GM12878 (cell line): ENCODE measurements at regions of chr20 and their contacts with region 1.

Region 1: GRCh38 chr20:6863798-6864201 is 96.3 kb downstream of the BMP2 start:
- DNase-seq: no peak
- ATAC-seq: peak; percentile 60
- H3K4me3 ChIP-seq: no peak overlapping the region
- H3K27ac ChIP-seq: no peak overlapping the region
- H3K4me1 ChIP-seq: no peaks in the 10 kb centered on the region
- H3K27me3 ChIP-seq: no peaks in the 10 kb centered on the region
- CTCF ChIP-seq: no peak
- EP300 ChIP-seq: no peak
- POLR2A ChIP-seq: no peak
- RAD21 ChIP-seq: no peak

Region 2: GRCh38 chr20:6533761-6534479 is 329.9 kb before region 1 on chr20:
- CTCF ChIA-PET with region 1: no interaction called
- POLR2A ChIA-PET with region 1: no interaction called
- RAD21 ChIA-PET with region 1: no interaction called
- SMC1A ChIA-PET with region 1: no interaction called
- in situ Hi-C with region 1: no loop called
- intact Hi-C with region 1: no loop called
- DNase-seq: no peak
- ATAC-seq: no peak
- H3K4me3 ChIP-seq: no peak overlapping the region
- H3K27ac ChIP-seq: no peak overlapping the region
- H3K4me1 ChIP-seq: no peaks in the 10 kb centered on the region
- H3K27me3 ChIP-seq: no peaks in the 10 kb centered on the region; a peak in 1 of 4 replicates
- CTCF ChIP-seq: no peak
- EP300 ChIP-seq: no peak
- POLR2A ChIP-seq: no peak
- RAD21 ChIP-seq: no peak

Region 3: DNA sequence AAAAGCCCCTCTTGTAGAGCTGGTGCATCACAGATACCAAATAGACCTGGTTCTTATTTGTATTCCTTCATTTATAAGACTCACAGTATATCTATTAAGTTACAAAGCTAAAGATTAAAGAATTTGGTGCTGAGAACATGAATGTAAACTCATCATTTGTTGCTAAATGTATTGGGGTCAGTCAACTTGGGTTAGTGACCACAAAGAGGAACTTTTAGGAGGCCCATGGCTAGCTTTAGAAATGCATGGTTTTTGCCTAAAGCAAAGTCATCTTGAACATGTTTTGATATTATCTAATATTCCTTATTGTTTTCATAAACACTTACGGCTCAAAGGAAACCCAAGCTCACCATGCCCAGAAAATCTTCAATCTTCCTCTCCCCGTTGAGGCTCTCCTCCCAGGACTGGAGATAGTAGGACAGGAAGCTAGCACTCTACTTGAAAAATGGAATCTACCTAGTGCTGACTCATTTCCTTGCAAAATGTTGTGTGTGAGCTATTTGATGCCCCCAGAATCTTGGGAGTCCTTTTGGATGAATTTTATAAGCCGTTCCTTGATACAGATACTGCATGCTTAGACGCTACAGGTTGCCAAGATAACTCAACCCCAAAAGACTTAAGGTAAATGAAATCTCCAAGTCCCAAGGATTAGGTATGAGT is 25.1 kb after region 1 on chr20:
- CTCF ChIA-PET with region 1: interaction called, 5 read pairs
- POLR2A ChIA-PET with region 1: interaction called, 9 read pairs
- RAD21 ChIA-PET with region 1: interaction called, 68 read pairs
- SMC1A ChIA-PET with region 1: interaction called, 120 read pairs
- in situ Hi-C with region 1: no loop called
- intact Hi-C with region 1: no loop called
- DNase-seq: no peak
- ATAC-seq: peak; percentile 17
- H3K4me3 ChIP-seq: no peak overlapping the region
- H3K27ac ChIP-seq: no peak overlapping the region
- H3K4me1 ChIP-seq: no peaks in the 10 kb centered on the region
- H3K27me3 ChIP-seq: no peaks in the 10 kb centered on the region
- CTCF ChIP-seq: no peak
- EP300 ChIP-seq: no peak
- POLR2A ChIP-seq: no peak
- RAD21 ChIP-seq: no peak

Region 4: GRCh38 chr20:6898928-6899327 is 35.1 kb after region 1 on chr20:
- CTCF ChIA-PET with region 1: interaction called, 4 read pairs
- POLR2A ChIA-PET with region 1: interaction called, 3 read pairs
- RAD21 ChIA-PET with region 1: interaction called, 23 read pairs
- SMC1A ChIA-PET with region 1: interaction called, 5 read pairs
- in situ Hi-C with region 1: no loop called
- intact Hi-C with region 1: no loop called
- DNase-seq: no peak
- ATAC-seq: peak; percentile 52
- H3K4me3 ChIP-seq: no peak overlapping the region
- H3K27ac ChIP-seq: no peak overlapping the region
- H3K4me1 ChIP-seq: no peaks in the 10 kb centered on the region
- H3K27me3 ChIP-seq: no peaks in the 10 kb centered on the region; a peak in 1 of 4 replicates
- CTCF ChIP-seq: no peak
- EP300 ChIP-seq: no peak
- POLR2A ChIP-seq: no peak
- RAD21 ChIP-seq: no peak

Region 5: DNA sequence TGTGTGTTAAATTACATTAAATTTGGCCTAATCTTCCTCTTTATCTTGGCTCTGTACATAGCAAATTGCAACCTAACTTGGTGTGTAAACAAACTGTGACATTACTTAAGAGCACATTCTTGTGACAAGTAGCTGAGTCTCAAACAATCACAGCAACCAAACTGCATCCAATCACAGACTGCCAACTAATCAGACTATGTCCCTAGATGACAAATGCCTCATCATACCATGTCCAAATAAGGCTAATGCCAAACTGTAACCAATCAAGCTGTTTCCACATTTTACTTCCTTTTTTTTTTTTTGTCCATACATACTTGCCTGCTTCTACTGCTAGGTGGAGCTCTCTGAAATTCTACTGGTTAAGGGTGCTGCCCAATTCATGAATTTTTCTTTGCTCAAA is 112.7 kb after region 1 on chr20:
- CTCF ChIA-PET with region 1: no interaction called
- POLR2A ChIA-PET with region 1: no interaction called
- RAD21 ChIA-PET with region 1: no interaction called
- SMC1A ChIA-PET with region 1: no interaction called
- in situ Hi-C with region 1: no loop called
- intact Hi-C with region 1: no loop called
- DNase-seq: no peak
- ATAC-seq: peak; percentile 58
- H3K4me3 ChIP-seq: no peak overlapping the region
- H3K27ac ChIP-seq: no peak overlapping the region
- H3K4me1 ChIP-seq: no peaks in the 10 kb centered on the region
- H3K27me3 ChIP-seq: no peaks in the 10 kb centered on the region
- CTCF ChIP-seq: no peak
- EP300 ChIP-seq: no peak
- POLR2A ChIP-seq: no peak
- RAD21 ChIP-seq: no peak

Region 6: DNA sequence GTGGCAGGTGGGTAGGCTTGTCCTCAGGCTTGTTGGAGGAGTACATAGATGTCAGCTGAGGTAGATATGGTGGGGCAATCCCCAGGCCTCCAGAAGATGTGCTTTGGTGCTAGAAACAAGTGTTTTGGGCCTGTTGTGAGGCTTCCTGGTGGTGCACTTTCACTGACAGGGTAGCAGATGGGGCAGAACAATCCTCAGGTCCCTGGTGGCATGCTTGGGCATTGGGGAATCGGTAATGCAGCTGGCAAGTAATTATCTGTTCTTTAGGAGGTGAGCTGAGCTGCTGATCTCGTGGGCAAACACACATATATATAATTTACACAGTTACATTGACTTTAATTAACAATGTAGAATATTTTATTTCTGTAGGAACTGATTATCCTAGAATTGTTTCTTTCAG is 362.4 kb after region 1 on chr20:
- CTCF ChIA-PET with region 1: no interaction called
- POLR2A ChIA-PET with region 1: no interaction called
- RAD21 ChIA-PET with region 1: no interaction called
- SMC1A ChIA-PET with region 1: no interaction called
- in situ Hi-C with region 1: no loop called
- intact Hi-C with region 1: no loop called
- DNase-seq: no peak
- ATAC-seq: no peak
- H3K4me3 ChIP-seq: no peak overlapping the region
- H3K27ac ChIP-seq: no peak overlapping the region
- H3K4me1 ChIP-seq: no peaks in the 10 kb centered on the region
- H3K27me3 ChIP-seq: no peaks in the 10 kb centered on the region
- CTCF ChIP-seq: no peak
- EP300 ChIP-seq: no peak
- POLR2A ChIP-seq: no peak
- RAD21 ChIP-seq: no peak